Common myeloid progenitor, CD34-positive (primary cell): ENCODE measurements at regions of chr5 and their contacts with region 1.

Region 1: GRCh38 chr5:135551593-135552447 is 16.1 kb upstream of the NEUROG1 start:
- DNase-seq: peak; percentile 83 to 89 (median 84)
- H3K4me3 ChIP-seq: no peak overlapping the region
- H3K27ac ChIP-seq: no peak overlapping the region
- H3K4me1 ChIP-seq: no peaks in the 10 kb centered on the region
- H3K27me3 ChIP-seq: peaks cover 2 to 65% (median 36%) of the 10 kb centered on the region in 5 experiments

Region 2: DNA sequence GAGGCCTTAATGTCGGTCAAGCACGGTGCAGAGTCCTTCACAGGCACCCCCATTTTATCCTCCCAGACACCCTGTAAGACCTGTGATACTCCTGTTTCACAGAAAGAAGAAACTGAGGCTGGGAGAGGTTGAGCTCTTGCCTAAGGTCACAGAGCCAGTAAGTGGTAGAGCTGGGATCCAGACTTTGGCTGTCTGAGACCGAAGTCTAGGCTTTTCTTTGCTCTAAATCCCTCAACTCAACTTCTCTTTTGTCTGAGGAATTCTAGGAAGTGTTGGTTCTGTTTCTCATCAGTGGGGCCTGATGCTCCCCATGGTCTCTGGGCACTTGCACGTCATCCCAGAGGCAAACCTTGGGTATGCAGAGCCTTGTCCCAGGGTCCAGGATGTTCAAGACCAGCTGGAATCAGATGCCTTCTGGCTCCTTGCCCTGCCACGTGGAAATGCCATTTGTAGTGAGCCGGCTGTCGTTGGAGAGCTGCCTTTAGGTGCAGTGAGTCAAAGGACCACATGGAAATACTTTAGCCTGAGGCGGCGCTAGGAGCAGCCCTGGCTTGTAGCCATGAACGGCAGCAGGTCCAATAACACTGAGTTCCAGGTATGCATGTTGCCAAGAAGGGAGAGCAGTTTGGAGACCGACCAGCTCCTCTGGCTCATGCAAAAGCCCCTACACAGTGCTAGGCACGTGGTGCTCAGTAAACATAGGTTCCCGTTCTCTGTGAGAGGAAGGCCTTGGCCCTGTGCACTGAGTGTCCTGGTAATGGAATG is 113.8 kb before region 1 on chr5:
- CTCF ChIA-PET with region 1: interaction called, 16 read pairs
- POLR2A ChIA-PET with region 1: no interaction called
- DNase-seq: no peak
- H3K4me3 ChIP-seq: peak overlapping the region in 1 of 7 experiments; percentile 43
- H3K27ac ChIP-seq: no peak overlapping the region
- H3K4me1 ChIP-seq: peaks cover 8 to 98% (median 75%) of the 10 kb centered on the region in 4 experiments
- H3K27me3 ChIP-seq: no peaks in the 10 kb centered on the region

Region 3: DNA sequence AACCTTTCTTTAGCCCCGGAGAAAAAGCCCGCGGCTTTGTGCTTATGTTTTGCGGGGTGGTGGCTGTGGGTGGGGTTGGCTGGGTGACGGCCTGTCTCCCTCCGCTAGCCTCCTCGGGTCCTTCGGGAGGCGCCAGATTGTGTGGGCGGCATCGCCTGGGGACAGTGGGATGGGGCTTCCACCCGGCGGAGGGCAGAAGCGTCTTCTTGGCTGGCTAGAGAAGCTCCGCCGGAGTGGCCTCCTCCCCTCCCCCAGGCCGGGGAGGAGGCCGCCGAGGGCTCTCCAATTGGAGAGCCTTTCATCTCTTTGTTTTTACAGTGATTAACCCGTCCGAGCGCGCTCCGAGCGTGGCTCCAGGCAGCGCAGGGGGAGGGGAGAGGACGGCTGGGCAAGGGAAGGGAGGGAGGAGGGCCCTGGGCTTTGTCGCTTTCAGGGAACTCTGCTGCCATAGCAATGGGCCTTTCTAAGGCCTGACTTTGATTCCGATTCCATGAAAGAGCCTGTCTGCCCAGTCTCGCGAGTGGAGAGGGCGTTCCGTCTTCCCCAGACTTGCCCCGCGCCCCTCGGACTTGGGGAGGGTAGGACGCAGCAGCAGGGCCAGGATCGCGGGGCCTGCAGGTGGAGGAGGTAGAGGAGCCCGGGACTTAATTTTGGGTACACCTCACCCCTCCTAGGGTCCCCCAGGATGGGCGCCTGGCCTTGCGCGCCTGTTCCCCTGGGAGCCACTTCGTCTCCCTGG is 62.9 kb before region 1 on chr5:
- CTCF ChIA-PET with region 1: interaction called, 20 read pairs
- POLR2A ChIA-PET with region 1: no interaction called
- DNase-seq: no peak
- H3K4me3 ChIP-seq: peak overlapping the region in 3 of 7 experiments; percentile 15 to 52 (median 38)
- H3K27ac ChIP-seq: no peak overlapping the region
- H3K4me1 ChIP-seq: peaks cover 0 to 38% (median 28%) of the 10 kb centered on the region in 4 experiments
- H3K27me3 ChIP-seq: peaks cover 0 to 92% (median 45%) of the 10 kb centered on the region in 5 experiments

Region 4: DNA sequence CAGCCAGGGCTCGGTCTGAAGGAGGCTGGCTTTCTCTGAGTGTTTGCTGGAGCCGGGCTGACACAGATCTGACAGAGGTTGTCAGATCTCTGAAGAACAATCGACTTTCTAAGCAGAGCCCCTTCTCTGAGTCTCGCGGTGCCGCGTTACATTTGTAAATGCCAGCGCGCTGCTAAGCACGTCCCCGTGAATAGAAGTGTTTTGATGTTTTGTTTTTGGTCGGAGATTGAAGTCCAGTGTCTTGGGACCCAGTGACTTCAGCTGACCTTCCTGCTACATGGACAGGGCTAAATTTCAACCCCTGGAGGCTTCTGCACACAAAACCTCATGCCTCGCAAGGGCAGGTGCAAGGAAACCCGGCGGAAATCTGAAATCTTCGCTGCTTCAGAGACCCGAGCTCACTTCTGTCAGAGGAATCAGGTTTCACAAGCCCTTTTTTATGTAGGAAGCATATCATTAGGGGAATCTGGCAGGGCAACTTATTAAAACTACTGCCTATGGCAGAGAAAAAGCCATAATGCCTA is 43.3 kb before region 1 on chr5:
- CTCF ChIA-PET with region 1: interaction called, 11 read pairs
- POLR2A ChIA-PET with region 1: no interaction called
- DNase-seq: peak in 2 of 3 donors; percentile 39 to 54
- H3K4me3 ChIP-seq: peak overlapping the region in 4 of 7 experiments; percentile 24 to 44 (median 40)
- H3K27ac ChIP-seq: no peak overlapping the region
- H3K4me1 ChIP-seq: peaks cover 0 to 7% (median 3%) of the 10 kb centered on the region in 4 experiments
- H3K27me3 ChIP-seq: peaks cover 10 to 57% (median 24%) of the 10 kb centered on the region in 5 experiments

Region 5: DNA sequence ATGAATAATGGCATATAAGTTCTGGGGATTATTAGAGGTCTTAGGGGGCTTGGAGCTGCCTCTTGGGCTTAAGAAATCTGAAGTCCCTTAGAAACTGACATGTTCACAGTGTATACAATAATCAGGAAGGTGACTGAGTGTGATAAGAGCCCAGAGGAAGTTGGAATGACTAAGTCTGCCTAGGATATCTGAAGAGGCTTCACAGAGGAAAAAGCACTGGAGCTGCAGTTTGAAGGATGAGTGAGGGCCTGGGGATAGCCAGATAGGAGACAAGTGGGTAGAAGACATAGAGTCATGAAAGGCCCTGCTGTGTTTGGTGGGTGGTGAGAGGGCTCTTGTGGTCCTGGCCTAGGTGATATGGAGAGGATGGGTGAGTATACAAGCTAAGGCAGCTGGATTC is 24.9 kb before region 1 on chr5:
- CTCF ChIA-PET with region 1: interaction called, 46 read pairs
- POLR2A ChIA-PET with region 1: no interaction called
- DNase-seq: no peak
- H3K4me3 ChIP-seq: no peak overlapping the region
- H3K27ac ChIP-seq: no peak overlapping the region
- H3K4me1 ChIP-seq: no peaks in the 10 kb centered on the region
- H3K27me3 ChIP-seq: peaks cover 14 to 63% (median 17%) of the 10 kb centered on the region in 5 experiments

Region 6: GRCh38 chr5:135535820-135536801 is 15.7 kb before region 1 on chr5 and contains the start of gene NEUROG1:
- CTCF ChIA-PET with region 1: interaction called, 46 read pairs
- POLR2A ChIA-PET with region 1: no interaction called
- DNase-seq: peak in 1 of 3 donors; percentile 30
- H3K4me3 ChIP-seq: peak within 1 kb of the TSS in 4 of 7 experiments; percentile 17 to 53 (median 29)
- H3K27ac ChIP-seq: no peak within 1 kb of the TSS
- H3K4me1 ChIP-seq: peaks cover 0 to 17% (median 12%) of the 10 kb centered on the region in 4 experiments
- H3K27me3 ChIP-seq: peaks cover 16 to 100% (median 67%) of the 10 kb centered on the region in 5 experiments